ENCODE measurements at regions of chr2 and their contacts with region 1.

Region 1: GRCh38 chr2:179340668-179341067 is 76.0 kb upstream of the SESTD1 start:
- DNase-seq: no peak
- H3K4me3 ChIP-seq: no peak overlapping the region
- H3K27ac ChIP-seq: no peak overlapping the region
- H3K4me1 ChIP-seq: peaks cover 21% of the 10 kb centered on the region
- H3K27me3 ChIP-seq: no peaks in the 10 kb centered on the region
- CTCF ChIP-seq: peak; percentile 49

Region 2: DNA sequence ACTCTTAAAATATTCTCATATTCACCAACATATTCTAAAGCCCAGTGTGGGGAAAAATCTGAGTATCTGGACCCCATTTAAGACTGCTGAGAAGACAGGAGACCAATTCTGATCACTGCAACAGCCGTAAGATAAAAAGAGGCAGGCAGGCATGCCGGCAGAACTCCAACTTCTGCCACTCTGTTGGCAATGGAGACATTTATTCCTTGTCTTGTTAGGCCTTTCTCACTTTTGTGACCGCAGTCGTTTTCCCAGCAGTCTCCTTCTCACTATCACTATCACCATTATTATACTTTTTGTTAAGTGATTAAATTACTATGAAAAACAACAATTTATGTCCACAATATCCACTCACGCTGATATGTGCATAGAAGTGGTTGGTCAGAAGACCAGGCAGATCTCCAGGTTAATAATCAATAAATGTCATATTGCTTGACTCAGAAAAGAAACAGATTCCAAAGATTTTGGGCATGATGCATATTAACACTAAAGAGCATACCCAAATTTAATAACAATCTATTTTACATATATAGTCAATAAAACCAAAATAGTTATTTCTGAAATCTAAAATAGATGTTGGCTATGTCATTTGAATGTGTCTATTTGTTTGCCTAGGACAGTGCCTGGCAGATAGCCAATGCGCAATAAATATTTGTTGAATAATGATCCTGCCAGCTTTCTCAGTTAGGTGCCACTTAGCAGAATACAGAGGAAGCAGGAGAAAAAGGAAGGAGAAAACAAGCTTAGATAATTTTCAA is 114.3 kb before region 1 on chr2:
- intact Hi-C with region 1: loop called (anchors 10 kb)
- DNase-seq: no peak
- H3K4me3 ChIP-seq: no peak overlapping the region
- H3K27ac ChIP-seq: peak overlapping the region; percentile 4
- H3K4me1 ChIP-seq: peaks cover 50% of the 10 kb centered on the region
- H3K27me3 ChIP-seq: no peaks in the 10 kb centered on the region
- CTCF ChIP-seq: no peak

Region 3: DNA sequence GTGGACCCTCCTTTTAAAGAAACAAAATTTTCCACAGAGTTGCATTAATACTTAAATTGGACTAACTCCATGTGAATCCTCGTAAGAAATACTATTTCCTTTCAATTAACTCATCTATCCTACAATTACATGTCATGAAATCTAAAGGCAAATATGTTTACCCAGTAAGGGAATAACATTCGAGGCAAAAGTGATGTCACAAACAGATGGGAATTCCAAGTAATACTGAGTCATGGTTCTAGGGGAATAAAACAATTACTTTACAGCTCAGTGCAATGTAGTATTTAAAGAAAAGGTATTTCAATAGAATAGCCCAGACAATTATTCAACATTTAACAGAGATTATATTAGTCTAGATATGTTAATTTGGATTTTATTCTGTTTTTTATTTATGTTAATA is 315.0 kb after region 1 on chr2:
- intact Hi-C with region 1: no loop called
- DNase-seq: no peak
- H3K4me3 ChIP-seq: no peak overlapping the region
- H3K27ac ChIP-seq: no peak overlapping the region
- H3K4me1 ChIP-seq: no peaks in the 10 kb centered on the region
- H3K27me3 ChIP-seq: no peaks in the 10 kb centered on the region
- CTCF ChIP-seq: no peak

Measured in left ventricle myocardium inferior (tissue), 1 donor.